Activated T-helper 1 cell treated with anti-CD3 and anti-CD28 coated beads, Interleukin-12 subunit alpha, Interleukin-12 subunit beta, Interleukin-2, Interleukin-4 antibody, amounts not matched to agents 30 ng/mL and 10 ng/mL and 1 ng/mL, durations not matched to agents 14 hours and 24 hours and 36 hours (primary cell): ENCODE measurements at regions of chr7 and their contacts with region 1.

Region 1: DNA sequence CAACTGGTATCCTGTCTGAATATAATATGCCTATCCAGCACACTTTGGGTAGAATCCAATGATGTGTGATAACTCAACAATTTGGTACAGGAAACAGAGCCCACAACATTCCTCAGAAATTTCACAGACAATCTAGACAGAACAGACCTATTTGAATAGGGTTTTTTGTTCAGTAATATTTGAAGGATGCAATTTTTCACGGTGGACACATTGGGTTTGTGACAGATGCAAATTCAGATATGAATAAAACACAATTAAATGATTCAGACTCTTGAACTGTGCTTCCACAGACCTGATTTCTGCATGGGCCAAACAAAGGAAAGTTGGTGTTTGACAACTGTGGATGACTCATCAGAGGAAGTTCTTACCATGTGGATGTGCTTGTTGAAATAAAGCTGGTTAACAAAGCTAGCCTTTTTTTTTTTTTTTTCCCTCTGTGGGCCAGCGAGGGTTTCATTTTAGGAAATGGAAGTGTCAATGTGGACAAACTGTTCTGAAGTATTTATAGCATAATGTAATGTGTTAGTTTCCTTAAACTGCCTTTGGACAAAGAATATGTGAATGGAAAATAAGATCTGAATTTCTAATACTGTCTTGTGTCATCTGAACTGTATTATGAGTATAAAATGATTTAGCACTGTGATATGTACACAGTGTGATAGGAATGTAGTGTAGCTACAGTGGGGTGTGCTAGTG is 43.2 kb upstream of the FAM133B start:
- DNase-seq: peak; percentile 48
- H3K4me3 Mint-ChIP-seq: peak overlapping the region; percentile 64
- H3K27ac Mint-ChIP-seq: peak overlapping the region; percentile 94
- H3K4me1 Mint-ChIP-seq: peaks cover 80% of the 10 kb centered on the region
- H3K27me3 Mint-ChIP-seq: no peaks in the 10 kb centered on the region

Region 2: DNA sequence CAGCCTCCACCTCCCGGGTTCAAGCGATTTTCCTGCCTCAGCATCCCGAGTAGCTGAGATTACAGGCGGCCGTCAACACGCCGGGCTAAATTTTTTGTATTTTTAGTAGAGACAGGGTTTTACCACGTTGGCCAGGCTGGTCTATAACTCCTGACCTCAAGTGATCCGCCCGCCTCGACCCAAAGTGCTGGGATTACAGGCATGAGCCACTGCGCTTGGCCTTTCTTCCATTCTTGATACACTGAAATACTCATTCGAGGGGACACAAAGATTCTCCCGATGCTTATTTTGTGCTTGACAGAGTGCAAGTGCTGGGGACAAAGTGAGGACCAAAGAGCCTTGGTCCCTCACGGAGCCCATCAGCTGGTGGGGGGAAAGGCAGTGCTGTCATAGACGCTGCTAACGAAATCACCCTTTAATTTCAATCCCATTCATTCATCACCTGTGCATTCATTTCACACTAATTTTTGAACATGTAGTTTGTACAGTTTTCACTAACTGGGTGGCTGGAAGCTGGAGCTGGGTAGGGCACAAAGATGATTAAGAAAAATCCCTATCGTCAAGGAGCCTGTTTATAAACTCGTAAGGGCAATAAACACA is 42.5 kb before region 1 on chr7:
- intact Hi-C with region 1: loop called (anchors 2 kb)
- DNase-seq: no peak
- H3K4me3 Mint-ChIP-seq: peak overlapping the region; percentile 92
- H3K27ac Mint-ChIP-seq: no peak overlapping the region
- H3K4me1 Mint-ChIP-seq: peaks cover 37% of the 10 kb centered on the region
- H3K27me3 Mint-ChIP-seq: peaks cover 5% of the 10 kb centered on the region

Region 3: DNA sequence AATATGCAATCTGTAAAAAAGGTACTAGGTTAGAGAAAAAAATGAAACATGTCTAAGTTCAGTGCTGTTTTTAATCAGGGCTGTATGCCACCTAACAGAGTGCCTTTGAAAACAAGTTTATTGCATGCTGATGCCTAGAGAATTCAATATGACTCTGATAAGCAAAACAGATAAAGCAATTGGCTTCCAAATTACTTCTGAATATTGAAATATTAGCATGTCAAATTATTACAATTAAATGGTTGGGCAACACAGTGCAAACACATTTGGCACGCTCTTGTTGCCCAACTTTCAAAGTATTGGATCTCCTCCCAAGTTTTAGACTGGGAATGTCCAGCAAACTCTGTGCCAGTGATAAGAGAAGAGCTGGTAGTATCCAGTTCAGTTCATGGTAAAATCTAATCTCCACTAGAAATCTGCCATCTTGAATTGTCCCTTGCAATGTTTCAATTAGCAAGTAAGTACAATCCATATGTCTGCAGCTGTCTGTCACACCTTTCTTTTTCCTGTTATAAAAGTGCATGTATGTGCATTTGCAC is 22.1 kb after region 1 on chr7:
- intact Hi-C with region 1: no loop called
- DNase-seq: no peak
- H3K4me3 Mint-ChIP-seq: peak overlapping the region; percentile 41
- H3K27ac Mint-ChIP-seq: peak overlapping the region; percentile 49
- H3K4me1 Mint-ChIP-seq: peaks cover 44% of the 10 kb centered on the region
- H3K27me3 Mint-ChIP-seq: no peaks in the 10 kb centered on the region

Region 4: DNA sequence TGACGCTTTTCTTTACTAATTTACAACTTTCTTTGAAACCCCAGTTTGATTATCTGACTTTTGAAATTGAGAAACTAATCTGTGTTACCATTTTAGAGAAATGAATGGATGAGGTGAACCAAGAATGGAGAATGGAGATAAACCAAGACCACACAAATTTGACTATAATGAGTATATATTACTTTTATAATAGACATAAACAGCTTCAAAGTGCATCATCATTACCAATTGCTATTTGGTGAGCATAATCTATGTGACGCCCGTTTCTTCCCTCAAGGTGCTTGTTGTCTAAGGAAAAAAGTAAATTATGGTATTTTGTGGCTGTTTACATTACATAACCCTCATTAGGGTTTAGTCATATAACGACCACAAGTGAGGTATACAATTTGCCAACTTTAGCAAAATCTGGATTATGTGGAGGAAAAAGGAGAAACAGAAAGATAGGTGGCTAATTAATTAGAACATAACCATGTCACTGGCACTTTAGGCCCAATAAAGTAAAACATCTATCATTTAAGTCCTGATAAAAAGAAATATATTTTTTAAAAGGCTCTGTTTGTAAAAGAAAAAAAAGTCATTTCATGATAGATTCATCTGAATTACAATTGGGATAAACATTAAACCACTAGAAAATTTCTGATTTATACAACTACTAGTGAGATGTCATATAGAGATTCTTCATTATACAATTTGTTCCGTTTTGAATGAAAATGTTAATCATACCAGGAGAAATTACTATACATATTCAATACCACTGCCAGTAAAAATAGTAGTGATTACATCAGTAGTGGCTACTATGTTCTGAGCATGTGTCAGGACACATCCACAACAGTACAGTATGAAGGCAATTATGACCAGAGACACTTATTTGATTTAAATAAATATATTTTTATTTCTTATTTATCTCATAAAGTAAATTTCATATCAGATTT is 75.0 kb after region 1 on chr7:
- intact Hi-C with region 1: loop called (anchors 1 kb)
- DNase-seq: no peak
- H3K4me3 Mint-ChIP-seq: no peak overlapping the region
- H3K27ac Mint-ChIP-seq: peak overlapping the region; percentile 84
- H3K4me1 Mint-ChIP-seq: peaks cover 59% of the 10 kb centered on the region
- H3K27me3 Mint-ChIP-seq: no peaks in the 10 kb centered on the region

Region 5: DNA sequence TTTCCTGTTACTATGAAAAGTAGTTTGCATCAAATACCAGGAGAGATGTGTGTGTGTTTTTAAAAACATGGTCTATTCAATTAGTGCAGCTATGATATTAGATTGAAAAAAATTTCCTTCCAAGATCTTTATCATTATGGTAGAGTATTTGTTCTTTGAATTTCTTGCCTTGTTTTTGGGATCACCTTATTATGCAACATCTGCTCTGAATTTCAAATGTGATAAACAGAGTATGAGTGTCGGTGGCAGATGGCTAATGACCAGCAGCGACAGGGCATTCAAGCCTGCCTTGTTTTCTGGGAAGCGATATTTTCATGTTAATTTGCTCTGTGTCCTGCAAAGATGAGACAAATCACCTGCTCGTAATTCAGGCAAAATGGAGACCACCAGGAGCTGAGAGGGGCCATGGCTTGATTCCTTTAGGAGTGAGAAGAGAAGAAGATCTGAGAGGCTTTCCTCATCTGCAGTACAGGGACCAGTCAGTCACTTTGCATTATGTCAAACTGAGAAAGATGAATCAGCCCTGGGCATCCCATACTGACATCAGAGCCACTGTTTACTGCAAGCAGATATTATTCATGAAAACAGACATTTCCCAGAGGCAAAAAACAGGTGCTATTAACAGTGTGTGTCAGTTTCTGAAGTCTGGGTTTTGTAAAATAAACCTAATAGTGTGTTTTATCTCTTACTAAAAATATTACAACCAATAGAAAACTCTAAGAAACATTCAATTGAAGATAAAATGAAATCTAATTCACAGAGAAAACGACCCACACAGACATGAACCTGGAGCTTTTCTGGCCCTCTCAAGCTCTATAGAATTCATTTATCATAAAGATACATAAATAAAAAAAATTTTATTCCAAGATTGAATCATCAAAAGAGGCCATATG is 135.4 kb after region 1 on chr7:
- intact Hi-C with region 1: loop called (anchors 2 kb)
- DNase-seq: peak; percentile 20
- H3K4me3 Mint-ChIP-seq: peak overlapping the region; percentile 47
- H3K27ac Mint-ChIP-seq: peak overlapping the region; percentile 85
- H3K4me1 Mint-ChIP-seq: peaks cover 83% of the 10 kb centered on the region
- H3K27me3 Mint-ChIP-seq: no peaks in the 10 kb centered on the region

Region 6: GRCh38 chr7:92953657-92954056 is 320.3 kb after region 1 on chr7:
- intact Hi-C with region 1: loop called (anchors 5 kb)
- DNase-seq: no peak
- H3K4me3 Mint-ChIP-seq: no peak overlapping the region
- H3K27ac Mint-ChIP-seq: peak overlapping the region; percentile 40
- H3K4me1 Mint-ChIP-seq: peaks cover 34% of the 10 kb centered on the region
- H3K27me3 Mint-ChIP-seq: peaks cover 1% of the 10 kb centered on the region